ENCODE measurements at regions of chr3 and their contacts with region 1.

Region 1: GRCh38 chr3:178597371-178597770 is 61.1 kb downstream of the KCNMB2 start:
- DNase-seq: no peak
- ATAC-seq: no peak
- H3K4me3 ChIP-seq: no peak overlapping the region
- H3K27ac ChIP-seq: no peak overlapping the region
- H3K4me1 ChIP-seq: peaks cover 0 to 9% (median 0%) of the 10 kb centered on the region in 12 donors
- H3K27me3 ChIP-seq: no peaks in the 10 kb centered on the region
- CTCF ChIP-seq: no peak
- POLR2A ChIP-seq: no peak

Region 2: GRCh38 chr3:178569826-178570225 is 27.5 kb before region 1 on chr3:
- intact Hi-C with region 1: loop called in 1 of 10 experiments (anchors 1 kb)
- DNase-seq: no peak
- ATAC-seq: no peak
- H3K4me3 ChIP-seq: no peak overlapping the region
- H3K27ac ChIP-seq: no peak overlapping the region
- H3K4me1 ChIP-seq: peaks cover 0 to 10% (median 0%) of the 10 kb centered on the region in 12 donors
- H3K27me3 ChIP-seq: no peaks in the 10 kb centered on the region
- CTCF ChIP-seq: no peak
- POLR2A ChIP-seq: no peak